ENCODE measurements at regions of chr4 and their contacts with region 1.

Region 1: GRCh38 chr4:88659055-88659889 is 38.4 kb downstream of the NAP1L5 start:
- DNase-seq: peak; percentile 77
- ATAC-seq: peak; percentile 89
- H3K4me3 ChIP-seq: no peak overlapping the region
- H3K27ac ChIP-seq: no peak overlapping the region
- H3K4me1 ChIP-seq: peaks cover 15% of the 10 kb centered on the region
- H3K27me3 ChIP-seq: no peaks in the 10 kb centered on the region
- CTCF ChIP-seq: peak; percentile 69
- POLR2A ChIP-seq: no peak
- RAD21 ChIP-seq: peak; percentile 76

Region 2: GRCh38 chr4:88528861-88529260 is 130.4 kb before region 1 on chr4:
- CTCF ChIA-PET with region 1: interaction called, 6 read pairs
- POLR2A ChIA-PET with region 1: no interaction called
- dilution Hi-C with region 1: no loop called
- in situ Hi-C with region 1: no loop called
- intact Hi-C with region 1: loop called (anchors 1 kb)
- DNase-seq: no peak
- ATAC-seq: no peak
- H3K4me3 ChIP-seq: no peak overlapping the region
- H3K27ac ChIP-seq: no peak overlapping the region
- H3K4me1 ChIP-seq: peaks cover 5% of the 10 kb centered on the region
- H3K27me3 ChIP-seq: no peaks in the 10 kb centered on the region
- CTCF ChIP-seq: peak; percentile 42
- POLR2A ChIP-seq: no peak
- RAD21 ChIP-seq: peak; percentile 48

Region 3: DNA sequence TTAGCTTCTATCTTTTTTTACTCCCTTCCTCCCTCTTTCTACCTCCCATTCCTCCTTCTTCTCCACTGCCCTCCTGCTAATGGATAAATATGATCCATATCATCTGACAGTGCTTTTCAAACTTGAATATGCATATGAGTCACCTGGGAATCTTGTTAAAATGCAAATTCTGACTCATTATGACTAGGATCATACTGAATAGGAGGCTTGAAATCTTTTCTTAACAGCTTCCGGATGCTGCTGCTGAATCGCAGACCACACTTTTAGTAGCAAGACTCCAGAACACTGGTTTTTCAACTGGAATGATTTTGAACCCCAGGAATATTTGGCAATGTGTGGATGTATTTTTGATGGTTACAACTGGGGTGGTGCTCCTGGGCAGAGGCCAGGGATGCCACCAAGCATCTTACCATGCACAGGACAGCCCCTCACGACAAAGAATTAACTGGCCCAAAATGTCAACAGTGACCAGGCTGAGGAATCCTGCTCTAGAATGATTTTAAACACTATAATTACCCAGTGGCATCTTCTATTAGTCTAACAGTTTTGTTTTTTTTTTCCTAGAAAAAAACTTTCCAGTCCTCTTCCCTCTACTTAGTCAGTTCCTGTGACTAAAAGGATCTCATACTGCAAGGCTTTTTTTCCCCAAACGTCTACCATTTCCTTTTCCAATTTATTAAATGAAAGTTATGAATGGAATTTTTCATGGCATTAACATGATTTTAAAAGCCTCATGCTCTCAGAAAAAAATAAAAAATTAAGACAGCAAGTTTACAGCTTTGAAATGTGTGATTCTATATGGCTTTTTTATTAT is 125.1 kb before region 1 on chr4:
- CTCF ChIA-PET with region 1: interaction called, 14 read pairs
- POLR2A ChIA-PET with region 1: no interaction called
- dilution Hi-C with region 1: no loop called
- in situ Hi-C with region 1: loop called (anchors 5 kb)
- intact Hi-C with region 1: loop called (anchors 2 kb)
- DNase-seq: peak; percentile 94
- ATAC-seq: peak; percentile 76
- H3K4me3 ChIP-seq: no peak overlapping the region
- H3K27ac ChIP-seq: peak overlapping the region; percentile 96
- H3K4me1 ChIP-seq: peaks cover 4% of the 10 kb centered on the region
- H3K27me3 ChIP-seq: no peaks in the 10 kb centered on the region
- CTCF ChIP-seq: no peak
- POLR2A ChIP-seq: peak; percentile 56; the same call in 1 of the 2 replicates
- RAD21 ChIP-seq: no peak

Region 4: GRCh38 chr4:88591787-88592599 is 67.3 kb before region 1 on chr4 and contains the start of gene HERC3:
- CTCF ChIA-PET with region 1: interaction called, 3 read pairs
- POLR2A ChIA-PET with region 1: no interaction called
- dilution Hi-C with region 1: no loop called
- in situ Hi-C with region 1: no loop called
- intact Hi-C with region 1: loop called (anchors 2 kb)
- DNase-seq: peak; percentile 80
- ATAC-seq: peak; percentile 98
- H3K4me3 ChIP-seq: peak within 1 kb of the TSS; percentile 62
- H3K27ac ChIP-seq: peak within 1 kb of the TSS; percentile 60
- H3K4me1 ChIP-seq: peaks cover 4% of the 10 kb centered on the region; the same call in 1 of the 2 replicates
- H3K27me3 ChIP-seq: no peaks in the 10 kb centered on the region
- CTCF ChIP-seq: 0 out of 2 replicates have a peak, but pooled peaks have one; percentile 11
- POLR2A ChIP-seq: peak; percentile 43; the same call in 1 of the 2 replicates
- RAD21 ChIP-seq: no peak
- total RNA-seq, gene HERC3: 9.5 and 13.1 TPM in 2 replicates

Measured in IMR-90 (cell line).